GM10248 (cell line): ENCODE measurements at regions of chr17 and their contacts with region 1.

Region 1: DNA sequence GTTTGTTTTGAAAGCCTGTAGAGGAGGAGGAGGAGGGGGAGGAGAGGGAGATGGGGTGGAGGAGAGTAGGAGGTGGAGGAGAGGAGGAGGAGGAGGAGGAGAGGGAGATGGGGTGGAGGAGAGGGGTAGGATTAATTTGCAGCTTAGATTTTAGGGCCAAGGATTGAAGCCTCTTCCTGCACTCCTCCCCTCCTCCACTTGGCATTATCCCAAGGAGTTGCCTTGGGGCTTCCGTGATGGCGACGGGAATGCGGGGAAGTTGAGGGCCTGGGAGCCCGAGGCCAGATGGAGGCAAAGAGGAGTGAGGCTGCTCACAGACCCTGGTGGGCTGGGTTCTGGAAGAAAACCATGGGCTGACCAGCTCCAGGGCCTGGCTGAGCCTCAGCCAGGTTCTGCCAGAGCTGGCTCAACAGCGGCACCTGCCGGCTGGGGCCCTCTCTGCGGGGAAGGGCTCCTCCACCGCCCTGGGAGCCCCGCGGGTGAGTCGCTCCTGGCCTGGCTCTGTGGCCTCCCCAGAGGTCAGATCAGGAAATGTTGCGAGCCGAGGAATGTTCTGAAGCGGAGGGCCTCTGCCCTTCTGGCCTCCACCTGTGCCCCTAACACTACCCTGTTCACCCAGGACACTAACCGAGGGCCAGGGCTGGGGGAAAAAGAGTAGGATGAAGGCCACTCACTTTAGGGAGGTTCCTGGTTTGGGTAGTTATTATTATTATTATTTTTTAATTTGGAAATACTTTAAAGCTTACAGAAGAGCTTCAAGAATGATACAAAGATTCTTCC is 23.9 kb upstream of the FMNL1 start:
- DNase-seq: peak; percentile 92
- CTCF ChIP-seq: peak; percentile 94

Region 2: GRCh38 chr17:44829523-44830358 is 368.0 kb before region 1 on chr17 and contains the start of gene GJC1:
- CTCF ChIA-PET with region 1: no interaction called
- POLR2A ChIA-PET with region 1: no interaction called
- DNase-seq: peak; percentile 61
- CTCF ChIP-seq: no peak

Region 3: GRCh38 chr17:45031231-45032173 is 166.2 kb before region 1 on chr17:
- CTCF ChIA-PET with region 1: no interaction called
- POLR2A ChIA-PET with region 1: no interaction called
- DNase-seq: no peak
- CTCF ChIP-seq: no peak

Region 4: GRCh38 chr17:45115871-45116724 is 81.6 kb before region 1 on chr17:
- CTCF ChIA-PET with region 1: interaction called, 10 read pairs
- POLR2A ChIA-PET with region 1: no interaction called
- DNase-seq: no peak
- CTCF ChIP-seq: no peak

Region 5: GRCh38 chr17:45161019-45161825 is 36.5 kb before region 1 on chr17:
- CTCF ChIA-PET with region 1: interaction called, 100 read pairs
- POLR2A ChIA-PET with region 1: no interaction called
- DNase-seq: peak; percentile 97
- CTCF ChIP-seq: peak; percentile 23

Region 6: GRCh38 chr17:45172454-45173286 is 25.1 kb before region 1 on chr17:
- CTCF ChIA-PET with region 1: interaction called, 24 read pairs
- POLR2A ChIA-PET with region 1: interaction called, 3 read pairs
- DNase-seq: peak; percentile 56
- CTCF ChIP-seq: no peak

Region 7: GRCh38 chr17:45184144-45184543 is 13.6 kb before region 1 on chr17:
- CTCF ChIA-PET with region 1: interaction called, 27 read pairs
- POLR2A ChIA-PET with region 1: no interaction called
- DNase-seq: no peak
- CTCF ChIP-seq: no peak

Region 8: DNA sequence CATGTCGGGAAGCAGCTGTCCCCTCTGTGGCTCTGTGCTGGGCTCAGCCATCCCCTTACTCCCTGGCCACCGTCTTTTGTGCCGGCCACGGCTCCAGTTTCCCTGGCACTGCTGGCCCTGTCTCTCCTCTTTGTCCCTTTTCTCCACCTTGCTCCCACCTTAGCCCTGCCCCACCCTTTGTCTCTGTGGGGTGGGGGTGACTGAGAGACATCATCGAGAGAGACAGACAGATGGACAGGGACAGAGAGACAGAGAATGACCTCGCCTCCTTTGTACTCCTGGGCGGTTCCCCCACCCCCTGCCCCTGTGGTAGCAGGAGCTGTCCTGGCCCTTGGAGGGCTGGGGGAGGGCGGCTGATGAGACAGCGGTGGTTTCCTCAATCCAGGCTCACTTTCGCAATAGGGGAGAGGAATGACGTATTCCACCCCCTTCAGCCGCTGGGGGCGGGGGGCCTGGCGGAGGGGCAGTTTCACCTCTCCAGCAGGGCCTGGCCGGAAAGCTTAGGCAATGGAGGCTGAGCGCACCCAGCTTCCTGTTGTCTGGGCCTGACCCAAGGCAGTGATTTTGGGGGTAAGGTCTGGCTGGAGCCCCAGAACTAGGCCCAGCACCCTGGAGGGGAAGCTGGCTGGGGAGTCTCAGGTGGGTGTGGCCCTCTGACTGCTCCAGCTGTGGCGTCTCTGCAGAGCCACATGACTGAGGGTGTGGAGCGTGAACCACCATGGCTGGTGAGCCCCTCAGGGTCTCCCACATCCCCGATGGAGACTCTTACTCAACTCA is 31.2 kb after region 1 on chr17:
- CTCF ChIA-PET with region 1: interaction called, 13 read pairs
- POLR2A ChIA-PET with region 1: no interaction called
- DNase-seq: peak; percentile 86
- CTCF ChIP-seq: no peak